Right cardiac atrium (tissue), 5 donors: ENCODE measurements at regions of chr6 and their contacts with region 1.

Region 1: DNA sequence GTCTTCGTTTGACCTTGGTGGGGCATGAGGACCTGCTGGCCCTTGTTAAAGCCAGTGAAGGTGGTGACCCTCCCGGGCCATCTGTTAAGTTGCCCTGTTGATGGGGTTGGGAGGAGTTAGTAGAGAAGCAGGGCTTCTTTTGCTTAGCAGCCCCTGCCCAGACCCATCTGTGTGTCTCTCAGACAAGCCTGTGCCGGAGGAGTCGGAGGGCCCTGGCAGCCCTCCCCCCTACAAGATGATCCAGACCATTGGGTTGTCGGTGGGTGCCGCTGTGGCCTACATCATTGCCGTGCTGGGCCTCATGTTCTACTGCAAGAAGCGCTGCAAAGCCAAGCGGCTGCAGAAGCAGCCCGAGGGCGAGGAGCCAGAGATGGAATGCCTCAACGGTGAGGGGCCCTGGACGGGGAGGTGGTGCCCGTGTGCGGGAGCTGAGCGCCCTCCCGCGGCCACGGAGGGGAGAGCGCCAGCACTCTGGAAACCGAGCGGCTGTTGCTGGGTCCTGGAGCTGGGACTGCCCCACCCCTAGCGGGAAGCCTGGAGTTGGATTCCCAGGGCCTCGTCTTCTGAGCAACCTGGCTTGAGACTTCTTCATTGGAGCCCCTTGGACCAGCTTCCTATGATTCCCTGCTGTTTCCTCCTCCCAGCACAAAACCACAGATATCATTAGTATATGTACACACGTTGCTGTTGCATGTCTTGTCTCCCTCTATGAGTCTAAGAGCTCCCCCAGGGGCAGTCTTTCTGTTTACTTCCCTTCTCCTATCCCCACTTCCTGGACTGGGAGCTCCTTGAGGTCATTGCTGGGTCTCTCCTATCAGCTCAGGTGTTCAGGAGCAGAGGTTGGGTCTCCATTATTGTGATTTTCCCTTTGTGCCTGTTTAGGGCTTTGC is 27.6 kb upstream of the SRF start:
- DNase-seq: peak; percentile 91 to 96 (median 96)
- ATAC-seq: peak; percentile 95 to 96
- H3K4me3 ChIP-seq: no peak overlapping the region
- H3K27ac ChIP-seq: peak overlapping the region; percentile 17
- H3K4me1 ChIP-seq: no peaks in the 10 kb centered on the region
- H3K27me3 ChIP-seq: no peaks in the 10 kb centered on the region

Region 2: GRCh38 chr6:42901536-42901957 is 241.9 kb before region 1 on chr6:
- intact Hi-C with region 1: loop called (anchors 5 to 10 kb)
- DNase-seq: peak; percentile 83 to 89 (median 87)
- ATAC-seq: peak; percentile 96
- H3K4me3 ChIP-seq: no peak overlapping the region
- H3K27ac ChIP-seq: no peak overlapping the region
- H3K4me1 ChIP-seq: no peaks in the 10 kb centered on the region
- H3K27me3 ChIP-seq: no peaks in the 10 kb centered on the region

Region 3: DNA sequence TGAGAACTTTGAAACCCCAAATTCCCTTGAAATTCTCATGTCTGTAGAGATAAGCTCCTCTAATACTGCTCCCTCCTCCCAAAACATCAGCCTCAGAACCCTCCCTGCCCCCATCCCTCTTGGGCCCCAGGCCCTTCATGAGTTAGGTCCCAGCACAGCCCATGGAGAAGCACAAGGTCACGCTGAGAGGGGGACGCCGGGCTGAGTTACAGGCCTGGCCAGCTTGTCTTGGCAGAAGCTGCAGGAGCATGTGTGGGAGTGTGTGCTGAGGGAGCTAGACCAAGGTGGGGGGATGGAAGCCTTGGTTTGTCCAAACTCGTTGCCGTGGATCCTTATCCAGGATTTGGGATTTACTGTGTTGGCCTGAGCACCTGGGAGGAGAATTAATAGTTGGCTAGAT is 236.1 kb before region 1 on chr6:
- intact Hi-C with region 1: loop called (anchors 5 to 10 kb)
- DNase-seq: peak; percentile 41 to 71 (median 65)
- ATAC-seq: peak; percentile 53 to 67
- H3K4me3 ChIP-seq: no peak overlapping the region
- H3K27ac ChIP-seq: no peak overlapping the region
- H3K4me1 ChIP-seq: no peaks in the 10 kb centered on the region
- H3K27me3 ChIP-seq: no peaks in the 10 kb centered on the region

Region 4: GRCh38 chr6:43013843-43014433 is 129.5 kb before region 1 on chr6 and contains the starts of genes KLHDC3 and MEA1:
- intact Hi-C with region 1: loop called (anchors 2 to 10 kb)
- DNase-seq: peak; percentile 99
- ATAC-seq: peak; percentile 96 to 97
- H3K4me3 ChIP-seq: peak within 1 kb of the TSS; percentile 78
- H3K27ac ChIP-seq: peak within 1 kb of the TSS; percentile 59
- H3K4me1 ChIP-seq: peaks cover 3% of the 10 kb centered on the region
- H3K27me3 ChIP-seq: no peaks in the 10 kb centered on the region
- total RNA-seq, gene KLHDC3: 97.3 to 176 (median 138) TPM
- total RNA-seq, gene MEA1: 29.9 to 44.4 (median 34.6) TPM

Region 5: DNA sequence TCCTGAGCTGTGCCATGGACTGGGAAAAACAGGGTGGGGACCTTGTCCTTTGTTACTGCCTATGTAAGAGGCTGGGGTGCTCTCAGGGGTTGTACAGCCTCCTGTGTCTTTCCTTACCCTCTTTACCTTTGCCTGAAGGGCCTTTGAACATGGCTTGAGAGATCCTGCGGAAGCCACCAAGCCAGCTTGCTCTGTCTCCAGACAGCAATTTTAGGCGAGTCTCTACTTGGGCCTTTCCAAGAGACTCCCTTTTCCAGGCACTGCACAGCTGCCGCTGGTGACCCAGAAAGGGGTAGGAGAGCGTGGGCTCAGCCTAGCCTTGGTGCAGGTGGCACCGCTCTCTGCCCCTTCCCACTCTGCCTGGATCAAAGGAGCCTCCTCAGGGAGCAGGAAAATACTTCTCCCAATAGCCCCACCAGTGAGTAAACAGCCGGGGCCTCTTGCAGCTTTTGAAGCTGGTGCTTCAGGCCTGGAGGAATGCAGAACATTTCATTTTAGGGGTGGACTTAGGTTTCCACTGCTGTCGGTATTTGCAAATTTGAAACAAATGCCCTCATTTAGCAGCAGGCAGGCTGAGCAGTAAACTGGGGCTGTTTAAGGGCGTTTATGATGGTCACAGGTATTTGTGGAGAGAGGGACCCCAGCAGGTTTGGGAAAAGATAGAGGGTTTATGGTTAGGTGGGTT is 53.5 kb before region 1 on chr6:
- intact Hi-C with region 1: loop called in 1 of 4 experiments (anchors 10 kb)
- DNase-seq: no peak
- ATAC-seq: no peak
- H3K4me3 ChIP-seq: no peak overlapping the region
- H3K27ac ChIP-seq: no peak overlapping the region
- H3K4me1 ChIP-seq: no peaks in the 10 kb centered on the region
- H3K27me3 ChIP-seq: no peaks in the 10 kb centered on the region